ENCODE measurements at regions of chr1 and their contacts with region 1.

Region 1: DNA sequence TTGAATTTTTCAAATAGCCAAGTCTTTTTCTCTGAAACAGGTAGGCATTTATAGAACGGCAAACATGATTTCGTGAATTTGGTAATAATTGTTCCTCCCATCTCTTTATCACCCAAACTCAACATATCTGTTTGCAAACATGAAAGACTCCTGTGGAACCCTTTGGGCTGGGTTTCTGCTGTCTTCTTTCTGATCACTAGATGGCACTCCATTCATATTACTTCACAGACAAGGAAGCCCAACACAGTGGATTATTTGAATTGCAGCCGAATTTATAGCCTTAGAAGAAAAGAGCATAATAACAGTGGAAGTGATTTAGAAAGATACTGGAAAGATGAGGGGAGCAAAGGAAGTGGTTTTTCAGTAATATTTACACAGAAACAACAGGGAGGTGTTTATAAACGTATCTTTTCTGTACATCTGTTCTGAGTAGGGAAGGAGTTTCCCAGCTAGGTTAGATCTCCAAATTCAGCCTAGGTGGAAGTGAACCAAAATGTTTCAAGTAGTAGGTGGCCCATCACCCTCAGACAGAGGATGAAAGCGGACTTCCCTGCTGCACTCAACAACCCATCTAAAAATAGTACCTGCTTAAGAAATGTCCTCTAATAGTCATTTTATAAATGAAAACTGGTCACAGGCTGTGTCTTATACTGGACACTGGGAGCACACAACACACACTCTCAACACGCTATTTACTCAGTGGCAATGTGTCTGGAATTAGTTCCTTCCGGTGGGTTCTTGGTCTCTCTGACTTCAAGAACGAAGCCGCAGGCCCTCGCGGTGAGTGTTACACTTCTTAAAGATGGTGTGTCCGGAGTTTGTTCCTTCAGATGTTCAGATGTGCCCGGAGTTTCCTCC is 67.6 kb downstream of the MAP3K21 start:
- DNase-seq: peak; percentile 59
- H3K4me3 Mint-ChIP-seq: no peak overlapping the region
- H3K27ac Mint-ChIP-seq: no peak overlapping the region
- H3K4me1 Mint-ChIP-seq: peaks cover 9% of the 10 kb centered on the region
- H3K27me3 Mint-ChIP-seq: no peaks in the 10 kb centered on the region
- CTCF ChIP-seq: peak; percentile 75

Region 2: DNA sequence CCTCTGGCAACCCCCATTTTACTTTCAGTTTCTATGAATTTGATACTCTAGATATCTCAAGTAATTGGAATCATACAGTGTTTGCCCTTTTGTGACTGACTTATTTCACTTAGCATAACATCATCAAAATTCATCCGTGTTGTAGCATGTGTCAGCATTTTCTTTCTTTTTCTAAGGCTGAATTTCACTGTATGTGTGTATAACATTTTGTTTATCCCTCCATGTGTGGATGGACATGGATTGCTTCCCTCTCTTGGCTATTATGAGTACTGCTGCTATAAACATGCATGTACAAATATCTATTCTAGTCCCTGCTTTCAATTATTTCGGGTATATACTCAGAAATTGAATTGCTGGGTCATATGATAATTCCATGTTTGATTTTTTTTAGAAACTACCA is 29.7 kb after region 1 on chr1:
- CTCF ChIA-PET with region 1: no interaction called
- intact Hi-C with region 1: loop called (anchors 1 kb)
- DNase-seq: no peak
- H3K4me3 Mint-ChIP-seq: no peak overlapping the region
- H3K27ac Mint-ChIP-seq: no peak overlapping the region
- H3K4me1 Mint-ChIP-seq: peaks cover 8% of the 10 kb centered on the region
- H3K27me3 Mint-ChIP-seq: no peaks in the 10 kb centered on the region
- CTCF ChIP-seq: peak; percentile 22

Region 3: GRCh38 chr1:233916706-233917105 is 521.6 kb after region 1 on chr1:
- CTCF ChIA-PET with region 1: no interaction called
- intact Hi-C with region 1: loop called (anchors 5 kb)
- DNase-seq: no peak
- H3K4me3 Mint-ChIP-seq: no peak overlapping the region
- H3K27ac Mint-ChIP-seq: no peak overlapping the region
- H3K4me1 Mint-ChIP-seq: peaks cover 27% of the 10 kb centered on the region
- H3K27me3 Mint-ChIP-seq: no peaks in the 10 kb centered on the region
- CTCF ChIP-seq: no peak

Region 4: DNA sequence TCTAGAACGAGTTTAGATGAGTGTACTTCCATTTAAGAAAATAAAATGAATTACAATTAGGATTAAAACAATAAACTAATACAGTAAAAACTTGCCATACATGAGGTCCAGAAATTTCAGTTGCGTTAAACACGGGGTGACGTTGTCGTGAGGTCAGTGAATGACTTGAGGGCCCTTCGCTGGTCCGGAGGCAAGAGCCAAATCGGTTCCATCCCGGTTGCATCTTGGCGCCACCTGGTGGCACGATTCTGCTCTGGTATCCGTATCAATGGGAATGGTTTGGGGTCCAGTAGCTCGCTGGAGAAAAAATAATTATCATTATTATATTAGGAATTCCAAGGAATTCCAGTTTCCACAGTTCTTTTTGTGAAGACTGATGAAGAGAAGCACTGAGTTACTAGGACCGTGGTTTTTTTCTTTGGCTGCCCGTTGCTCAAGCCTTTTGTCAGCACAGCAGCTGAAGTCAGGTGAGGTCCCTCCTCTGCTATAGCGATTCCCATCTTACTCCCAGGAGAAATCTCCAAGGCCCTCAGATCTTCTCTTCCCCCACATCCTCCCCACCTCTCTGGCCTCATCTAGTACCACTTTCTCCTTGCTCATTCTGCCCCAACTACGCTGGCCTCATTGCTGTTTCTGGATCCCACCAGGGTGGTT is 670.8 kb after region 1 on chr1:
- CTCF ChIA-PET with region 1: interaction called, 7 read pairs
- intact Hi-C with region 1: loop called (anchors 1 kb)
- DNase-seq: peak; percentile 88
- H3K4me3 Mint-ChIP-seq: no peak overlapping the region
- H3K27ac Mint-ChIP-seq: no peak overlapping the region
- H3K4me1 Mint-ChIP-seq: no peaks in the 10 kb centered on the region
- H3K27me3 Mint-ChIP-seq: no peaks in the 10 kb centered on the region
- CTCF ChIP-seq: peak; percentile 91

Region 5: GRCh38 chr1:234114648-234115307 is 719.7 kb after region 1 on chr1:
- CTCF ChIA-PET with region 1: interaction called, 3 read pairs
- intact Hi-C with region 1: loop called (anchors 1 kb)
- DNase-seq: peak; percentile 28
- H3K4me3 Mint-ChIP-seq: peak overlapping the region; percentile 40
- H3K27ac Mint-ChIP-seq: no peak overlapping the region
- H3K4me1 Mint-ChIP-seq: peaks cover 9% of the 10 kb centered on the region
- H3K27me3 Mint-ChIP-seq: peaks cover 7% of the 10 kb centered on the region
- CTCF ChIP-seq: peak; percentile 57